ENCODE measurements at regions of chr16 and their contacts with region 1.

Region 1: DNA sequence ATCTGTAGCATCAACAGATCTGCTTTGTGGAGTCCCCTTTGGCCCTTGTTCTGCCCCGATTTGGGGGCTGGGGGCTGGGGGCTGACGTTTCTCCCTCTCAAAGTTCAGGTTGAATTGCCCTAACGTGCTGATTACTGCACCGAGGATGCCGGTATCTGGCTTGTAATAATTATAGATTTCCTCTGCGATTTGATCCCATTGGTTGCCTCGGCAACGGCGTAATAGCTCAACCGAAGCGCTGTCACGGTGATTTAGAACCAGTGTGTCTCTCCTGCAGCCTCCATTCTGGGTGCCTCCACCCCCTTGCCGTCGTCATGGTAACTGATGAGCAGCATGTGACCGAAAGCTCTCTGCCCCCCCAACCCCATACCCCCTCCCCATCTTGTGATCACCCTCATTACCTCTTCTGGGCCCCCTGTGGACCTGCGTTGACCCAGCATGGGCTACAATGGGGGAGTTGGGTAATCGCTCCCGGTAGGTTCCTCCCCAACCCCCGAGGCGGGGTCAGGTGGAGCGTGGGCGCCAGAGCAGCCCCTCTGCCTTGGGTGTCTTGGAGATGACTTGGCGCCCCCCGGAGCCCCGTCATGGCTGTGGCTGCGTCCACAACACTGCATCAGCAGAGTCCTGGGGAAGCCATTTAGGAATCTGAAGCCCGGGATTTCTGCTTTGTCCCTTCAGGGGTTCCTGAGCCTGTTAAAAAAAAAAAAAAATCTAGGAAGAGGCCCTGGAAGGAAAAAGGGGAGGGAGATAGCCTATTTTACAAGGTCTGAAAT is 38.4 kb downstream of the ABAT start:
- DNase-seq: no peak
- ATAC-seq: no peak
- H3K4me3 ChIP-seq: no peak overlapping the region
- H3K27ac ChIP-seq: no peak overlapping the region
- H3K4me1 ChIP-seq: no peaks in the 10 kb centered on the region
- H3K27me3 ChIP-seq: no peaks in the 10 kb centered on the region
- CTCF ChIP-seq: no peak
- POLR2A ChIP-seq: no peak

Region 2: GRCh38 chr16:8655184-8655717 is 57.5 kb before region 1 on chr16:
- intact Hi-C with region 1: loop called in 1 of 10 experiments (anchors 10 kb)
- DNase-seq: no peak
- ATAC-seq: peak in 1 of 4 donors; percentile 45
- H3K4me3 ChIP-seq: no peak overlapping the region
- H3K27ac ChIP-seq: no peak overlapping the region
- H3K4me1 ChIP-seq: no peaks in the 10 kb centered on the region
- H3K27me3 ChIP-seq: no peaks in the 10 kb centered on the region
- CTCF ChIP-seq: peak in 6 of 12 donors; percentile 8 to 33 (median 19)
- POLR2A ChIP-seq: no peak